Activated B cell treated with CpG ODN at 0.5 μM for 24 hours (primary cell): ENCODE measurements at regions of chr21 and their contacts with region 1.

Region 1: GRCh38 chr21:42684109-42684916 is 30.9 kb downstream of the PDE9A start:
- DNase-seq: no peak
- ATAC-seq: no peak
- H3K4me3 Mint-ChIP-seq: no peak overlapping the region
- H3K27ac Mint-ChIP-seq: no peak overlapping the region
- H3K4me1 Mint-ChIP-seq: peaks cover 5% of the 10 kb centered on the region
- H3K27me3 Mint-ChIP-seq: peaks cover 26% of the 10 kb centered on the region
- CTCF ChIP-seq: no peak

Region 2: GRCh38 chr21:42400525-42400924 is 283.8 kb before region 1 on chr21:
- CTCF ChIA-PET with region 1: no interaction called
- POLR2A ChIA-PET with region 1: interaction called, 12 read pairs
- intact Hi-C with region 1: no loop called
- DNase-seq: no peak
- ATAC-seq: peak; percentile 42
- H3K4me3 Mint-ChIP-seq: no peak overlapping the region
- H3K27ac Mint-ChIP-seq: no peak overlapping the region
- H3K4me1 Mint-ChIP-seq: peaks cover 20% of the 10 kb centered on the region
- H3K27me3 Mint-ChIP-seq: peaks cover 4% of the 10 kb centered on the region
- CTCF ChIP-seq: no peak

Region 3: DNA sequence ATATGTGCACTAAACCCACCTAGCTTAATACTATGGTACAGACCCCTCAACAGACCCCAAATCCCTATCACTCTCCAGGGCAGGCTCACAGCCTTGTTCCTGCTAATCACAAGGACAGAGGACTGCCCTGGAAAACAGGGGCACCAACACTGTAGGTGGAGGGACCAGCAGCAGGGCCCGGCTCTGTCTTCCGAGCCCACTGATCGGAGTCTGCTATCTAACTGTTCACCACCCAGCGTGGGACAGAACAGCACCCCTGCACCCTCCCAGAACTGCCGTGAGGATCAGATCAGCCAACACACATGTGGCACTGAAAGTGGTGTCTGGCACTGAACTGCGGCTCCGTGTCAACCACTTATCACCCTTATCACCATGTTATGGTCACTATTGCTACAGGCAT is 188.8 kb after region 1 on chr21:
- CTCF ChIA-PET with region 1: no interaction called
- POLR2A ChIA-PET with region 1: no interaction called
- intact Hi-C with region 1: no loop called
- DNase-seq: no peak
- ATAC-seq: no peak
- H3K4me3 Mint-ChIP-seq: no peak overlapping the region
- H3K27ac Mint-ChIP-seq: no peak overlapping the region
- H3K4me1 Mint-ChIP-seq: peaks cover 2% of the 10 kb centered on the region
- H3K27me3 Mint-ChIP-seq: no peaks in the 10 kb centered on the region
- CTCF ChIP-seq: no peak